Brain microvascular endothelial cell (primary cell): ENCODE measurements at regions of chr10 and their contacts with region 1.

Region 1: GRCh38 chr10:69237528-69238159 is 17.5 kb downstream of the HKDC1 start:
- DNase-seq: peak; percentile 75
- H3K4me3 ChIP-seq: no peak overlapping the region
- H3K27ac ChIP-seq: no peak overlapping the region
- H3K27me3 ChIP-seq: no peaks in the 10 kb centered on the region
- CTCF ChIP-seq: peak; percentile 96

Region 2: GRCh38 chr10:68618234-68618633 is 619.4 kb before region 1 on chr10:
- in situ Hi-C with region 1: no loop called
- DNase-seq: no peak
- H3K4me3 ChIP-seq: no peak overlapping the region
- H3K27ac ChIP-seq: no peak overlapping the region
- H3K27me3 ChIP-seq: no peaks in the 10 kb centered on the region
- CTCF ChIP-seq: no peak

Region 3: GRCh38 chr10:69392481-69393000 is 154.9 kb after region 1 on chr10:
- in situ Hi-C with region 1: loop called (anchors 25 kb)
- DNase-seq: peak; percentile 64
- H3K4me3 ChIP-seq: no peak overlapping the region
- H3K27ac ChIP-seq: no peak overlapping the region
- H3K27me3 ChIP-seq: no peaks in the 10 kb centered on the region
- CTCF ChIP-seq: peak; percentile 98